Left colon (tissue), 2 donors: ENCODE measurements at regions of chr17 and their contacts with region 1.

Region 1: GRCh38 chr17:81094509-81095382 is 59.8 kb downstream of the BAIAP2 start:
- DNase-seq: peak; percentile 53 to 76
- ATAC-seq: peak; percentile 11

Region 2: DNA sequence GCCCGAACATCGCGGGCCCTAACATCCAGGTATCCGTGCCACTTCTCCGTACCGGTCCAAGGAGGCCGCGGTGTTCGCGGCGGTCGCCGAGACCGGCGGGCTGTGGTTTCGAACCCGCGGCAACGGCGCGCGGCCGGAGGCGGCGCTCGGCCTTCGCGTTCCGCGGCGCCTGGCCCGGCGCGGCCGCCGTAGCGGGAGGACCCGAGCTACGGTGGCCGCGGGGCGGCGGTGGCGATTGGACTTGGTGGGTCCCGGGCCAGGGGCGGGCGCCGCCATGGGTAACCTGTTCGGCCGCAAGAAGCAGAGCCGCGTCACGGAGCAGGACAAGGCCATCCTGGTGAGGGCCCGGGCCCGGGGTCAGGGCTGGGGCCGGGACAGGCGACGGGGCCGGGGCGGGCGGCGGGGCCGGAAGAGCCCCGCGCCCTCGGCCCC is 103.1 kb before region 1 on chr17 and contains the start of gene CHMP6:
- intact Hi-C with region 1: loop called in 1 of 2 experiments (anchors 5 kb)
- DNase-seq: peak; percentile 70 to 85
- ATAC-seq: peak; percentile 66
- total RNA-seq, gene CHMP6: 37.2 to 39.5 TPM

Region 3: DNA sequence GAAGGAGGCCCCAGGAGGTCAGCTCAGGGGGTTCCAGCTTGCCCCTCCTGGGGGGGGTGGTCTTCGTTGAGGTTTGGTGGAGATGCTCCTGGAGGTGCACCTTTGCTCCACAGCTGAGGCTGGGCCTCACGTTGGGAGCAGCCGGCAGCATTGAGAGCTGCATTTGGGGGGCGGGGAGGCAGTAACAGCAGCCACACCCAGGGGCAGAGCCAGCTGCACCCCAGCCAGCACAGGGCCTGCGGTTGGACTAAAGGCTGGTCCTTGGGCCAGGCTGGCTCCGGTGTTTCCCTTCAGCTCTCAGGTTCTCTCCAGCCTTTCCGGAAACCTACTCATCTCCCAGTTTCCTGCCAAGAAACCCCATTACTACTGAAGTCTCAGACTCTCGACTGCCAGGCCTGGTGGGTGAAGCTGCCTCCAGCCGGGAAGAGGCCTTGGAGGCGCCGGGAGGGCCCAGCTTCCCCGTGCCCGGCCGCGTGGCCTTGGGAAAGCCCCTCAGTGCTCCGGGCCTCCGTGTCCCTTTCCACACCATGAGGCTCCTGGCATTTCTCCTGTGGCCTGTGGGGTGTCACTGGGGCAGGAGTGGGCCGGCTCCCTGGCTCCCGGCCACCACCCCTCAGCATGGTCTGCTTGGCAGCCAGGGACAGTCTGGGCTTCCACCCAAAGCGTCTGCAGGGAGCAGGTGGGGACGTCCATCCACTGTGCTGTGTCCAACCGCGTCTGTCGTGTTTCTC is 73.8 kb before region 1 on chr17:
- intact Hi-C with region 1: loop called in 1 of 2 experiments (anchors 10 kb)
- DNase-seq: peak; percentile 81 to 84
- ATAC-seq: peak; percentile 75

Region 4: GRCh38 chr17:81044764-81045589 is 49.8 kb before region 1 on chr17:
- intact Hi-C with region 1: no loop called
- DNase-seq: peak; percentile 80 to 86
- ATAC-seq: peak; percentile 73

Region 5: GRCh38 chr17:81165246-81166032 is 70.7 kb after region 1 on chr17 and contains the start of gene PVALEF:
- intact Hi-C with region 1: no loop called
- DNase-seq: no peak
- ATAC-seq: peak; percentile 34
- total RNA-seq, gene PVALEF: not detected